Activated CD4-positive, alpha-beta memory T cell treated with anti-CD3 and anti-CD28 coated beads for 36 hours (primary cell): ENCODE measurements at regions of chr9 and their contacts with region 1.

Region 1: GRCh38 chr9:22079873-22080341 is 70.8 kb upstream of the CDKN2B start:
- DNase-seq: peak; percentile 76
- H3K4me3 Mint-ChIP-seq: peak overlapping the region; percentile 24
- H3K27ac Mint-ChIP-seq: peak overlapping the region; percentile 42
- H3K4me1 Mint-ChIP-seq: peaks cover 43% of the 10 kb centered on the region
- H3K27me3 Mint-ChIP-seq: peaks cover 52% of the 10 kb centered on the region

Region 2: GRCh38 chr9:21357479-21358460 is 722.1 kb before region 1 on chr9:
- CTCF ChIA-PET with region 1: no interaction called
- POLR2A ChIA-PET with region 1: no interaction called
- intact Hi-C with region 1: loop called (anchors 1 kb)
- DNase-seq: peak; percentile 30
- H3K4me3 Mint-ChIP-seq: peak overlapping the region; percentile 3
- H3K27ac Mint-ChIP-seq: no peak overlapping the region
- H3K4me1 Mint-ChIP-seq: peaks cover 20% of the 10 kb centered on the region
- H3K27me3 Mint-ChIP-seq: peaks cover 38% of the 10 kb centered on the region

Region 3: DNA sequence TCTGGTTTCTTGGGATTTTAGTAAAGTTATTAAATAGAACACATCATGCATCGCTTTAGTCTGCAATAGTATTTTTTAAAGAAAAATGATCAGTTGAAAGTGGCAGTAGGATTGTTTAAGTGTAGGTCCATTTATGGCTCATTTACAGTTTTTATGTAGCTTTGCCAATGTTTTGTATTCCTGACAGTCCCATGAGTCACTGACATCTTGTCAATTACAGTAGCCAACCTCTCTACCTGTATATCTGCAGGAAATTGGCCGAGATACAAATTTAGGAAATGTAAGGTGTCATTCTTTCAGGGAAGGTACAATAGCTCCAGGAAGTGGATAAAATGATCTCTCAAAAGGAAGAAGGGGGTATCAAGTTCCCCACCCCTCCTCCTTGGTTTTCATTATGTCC is 325.2 kb before region 1 on chr9:
- CTCF ChIA-PET with region 1: no interaction called
- POLR2A ChIA-PET with region 1: no interaction called
- intact Hi-C with region 1: no loop called
- DNase-seq: no peak
- H3K4me3 Mint-ChIP-seq: no peak overlapping the region
- H3K27ac Mint-ChIP-seq: no peak overlapping the region
- H3K4me1 Mint-ChIP-seq: no peaks in the 10 kb centered on the region
- H3K27me3 Mint-ChIP-seq: peaks cover 28% of the 10 kb centered on the region

Region 4: GRCh38 chr9:21831961-21832509 is 247.9 kb before region 1 on chr9:
- CTCF ChIA-PET with region 1: no interaction called
- POLR2A ChIA-PET with region 1: no interaction called
- intact Hi-C with region 1: loop called (anchors 1 kb)
- DNase-seq: peak; percentile 74
- H3K4me3 Mint-ChIP-seq: no peak overlapping the region
- H3K27ac Mint-ChIP-seq: peak overlapping the region; percentile 33
- H3K4me1 Mint-ChIP-seq: peaks cover 66% of the 10 kb centered on the region
- H3K27me3 Mint-ChIP-seq: no peaks in the 10 kb centered on the region

Region 5: GRCh38 chr9:22097697-22098096 is 17.8 kb after region 1 on chr9:
- CTCF ChIA-PET with region 1: interaction called, 9 read pairs
- POLR2A ChIA-PET with region 1: interaction called, 5 read pairs
- intact Hi-C with region 1: loop called (anchors 1 kb)
- DNase-seq: no peak
- H3K4me3 Mint-ChIP-seq: no peak overlapping the region
- H3K27ac Mint-ChIP-seq: no peak overlapping the region
- H3K4me1 Mint-ChIP-seq: peaks cover 19% of the 10 kb centered on the region
- H3K27me3 Mint-ChIP-seq: peaks cover 46% of the 10 kb centered on the region

Region 6: GRCh38 chr9:22211593-22212360 is 131.9 kb after region 1 on chr9:
- CTCF ChIA-PET with region 1: interaction called, 3 read pairs
- POLR2A ChIA-PET with region 1: interaction called, 3 read pairs
- intact Hi-C with region 1: loop called (anchors 1 kb)
- DNase-seq: no peak
- H3K4me3 Mint-ChIP-seq: no peak overlapping the region
- H3K27ac Mint-ChIP-seq: no peak overlapping the region
- H3K4me1 Mint-ChIP-seq: peaks cover 32% of the 10 kb centered on the region
- H3K27me3 Mint-ChIP-seq: no peaks in the 10 kb centered on the region